ENCODE measurements at regions of chr5 and their contacts with region 1.

Region 1: DNA sequence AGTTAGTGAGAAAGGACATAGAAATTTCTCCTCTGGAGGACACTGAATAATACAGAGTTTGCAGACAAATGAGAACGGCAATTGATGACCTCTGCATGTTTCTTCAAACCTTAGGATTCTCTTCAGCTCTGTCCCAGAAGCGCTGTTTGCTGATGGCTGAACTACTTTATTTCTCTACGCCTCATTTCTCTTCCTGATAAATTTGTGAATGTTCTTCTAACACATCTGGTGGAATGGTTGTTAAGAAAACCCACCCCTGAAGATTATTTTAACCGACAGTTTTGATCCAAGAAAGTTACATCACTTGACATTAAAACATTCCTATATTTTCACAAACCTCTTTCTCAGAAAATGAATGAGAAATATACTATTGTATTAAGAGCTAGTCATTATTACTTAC is 1150.6 kb downstream of the DTWD2 start:
- DNase-seq: no peak
- ATAC-seq: no peak
- H3K4me3 ChIP-seq: no peak overlapping the region
- H3K27ac ChIP-seq: no peak overlapping the region
- H3K4me1 ChIP-seq: no peaks in the 10 kb centered on the region
- H3K27me3 ChIP-seq: no peaks in the 10 kb centered on the region
- CTCF ChIP-seq: no peak
- POLR2A ChIP-seq: no peak

Region 2: DNA sequence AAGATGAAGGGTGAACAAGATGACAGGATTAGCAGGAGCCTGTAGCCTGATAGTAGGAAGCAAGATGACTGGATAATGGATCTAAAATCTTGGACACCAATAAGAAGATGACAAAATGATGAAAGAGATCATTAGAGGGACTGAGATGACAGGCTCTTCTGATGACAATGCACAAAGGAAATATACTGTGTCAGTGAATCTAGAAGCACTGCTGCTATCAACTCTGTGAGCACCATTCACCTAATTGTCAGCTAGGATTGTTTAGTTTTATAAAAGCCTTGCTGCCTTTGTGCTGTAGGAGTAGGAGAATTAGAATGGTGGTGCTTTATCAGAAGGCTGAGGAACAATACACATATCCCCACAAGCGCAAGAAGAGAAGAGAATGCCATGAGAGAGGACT is 22.8 kb after region 1 on chr5:
- intact Hi-C with region 1: loop called in 1 of 10 experiments (anchors 1 kb)
- DNase-seq: no peak
- ATAC-seq: no peak
- H3K4me3 ChIP-seq: no peak overlapping the region
- H3K27ac ChIP-seq: no peak overlapping the region
- H3K4me1 ChIP-seq: peaks cover 0 to 21% (median 0%) of the 10 kb centered on the region in 12 donors
- H3K27me3 ChIP-seq: no peaks in the 10 kb centered on the region
- CTCF ChIP-seq: no peak
- POLR2A ChIP-seq: no peak

Measured in heart left ventricle (tissue), 16 donors.